AG04450 (cell line): ENCODE measurements at regions of chr1 and their contacts with region 1.

Region 1: GRCh38 chr1:246012341-246012740 is 494.7 kb downstream of the SMYD3 start:
- DNase-seq: no peak
- H3K4me3 ChIP-seq: no peak overlapping the region
- H3K27ac ChIP-seq: no peak overlapping the region
- H3K27me3 ChIP-seq: no peaks in the 10 kb centered on the region
- CTCF ChIP-seq: peak; percentile 61

Region 2: GRCh38 chr1:246280551-246280950 is 268.2 kb after region 1 on chr1:
- CTCF ChIA-PET with region 1: interaction called, 24 read pairs
- POLR2A ChIA-PET with region 1: no interaction called
- DNase-seq: no peak
- H3K4me3 ChIP-seq: no peak overlapping the region
- H3K27ac ChIP-seq: no peak overlapping the region
- H3K27me3 ChIP-seq: no peaks in the 10 kb centered on the region
- CTCF ChIP-seq: peak; percentile 50